Aorta (tissue), 5 donors: ENCODE measurements at regions of chr3 and their contacts with region 1.

Region 1: GRCh38 chr3:14508961-14509795 is 31.0 kb downstream of the GRIP2 start:
- DNase-seq: peak; percentile 70 to 92
- ATAC-seq: peak; percentile 70
- H3K4me3 ChIP-seq: no peak overlapping the region
- H3K27ac ChIP-seq: no peak overlapping the region
- H3K4me1 ChIP-seq: no peaks in the 10 kb centered on the region
- H3K27me3 ChIP-seq: no peaks in the 10 kb centered on the region

Region 2: DNA sequence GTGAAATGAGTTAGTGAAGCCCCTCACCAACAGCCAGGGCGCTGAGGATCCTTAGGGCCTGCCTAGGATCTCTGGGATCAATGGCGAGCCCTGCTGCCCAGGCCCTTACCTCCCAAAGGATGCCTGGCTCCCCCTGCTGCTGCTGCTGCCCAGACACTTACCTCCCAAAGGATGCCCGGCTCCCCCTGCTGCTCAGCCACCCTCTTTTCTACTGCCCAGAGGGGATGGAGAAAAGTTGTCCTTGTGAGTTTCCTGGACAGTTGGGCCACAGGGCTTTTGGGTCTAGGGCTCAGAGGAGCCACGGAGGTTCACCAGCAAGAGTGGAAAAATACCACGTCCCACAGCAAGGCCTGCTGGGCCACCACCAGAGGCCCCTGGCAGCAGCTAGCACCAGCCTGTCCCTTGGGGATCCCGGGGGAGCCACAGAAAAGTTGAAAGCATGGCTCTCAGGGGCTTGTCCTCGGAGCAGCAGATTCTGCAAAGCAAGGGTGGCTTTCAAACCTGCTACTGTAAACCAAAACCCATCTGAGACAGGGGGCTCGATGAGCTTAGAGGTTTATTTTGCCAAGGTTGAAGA is 47.3 kb before region 1 on chr3:
- intact Hi-C with region 1: no loop called
- DNase-seq: peak in 1 of 2 donors; percentile 83
- ATAC-seq: peak; percentile 23
- H3K4me3 ChIP-seq: no peak overlapping the region
- H3K27ac ChIP-seq: no peak overlapping the region
- H3K4me1 ChIP-seq: no peaks in the 10 kb centered on the region
- H3K27me3 ChIP-seq: no peaks in the 10 kb centered on the region

Region 3: DNA sequence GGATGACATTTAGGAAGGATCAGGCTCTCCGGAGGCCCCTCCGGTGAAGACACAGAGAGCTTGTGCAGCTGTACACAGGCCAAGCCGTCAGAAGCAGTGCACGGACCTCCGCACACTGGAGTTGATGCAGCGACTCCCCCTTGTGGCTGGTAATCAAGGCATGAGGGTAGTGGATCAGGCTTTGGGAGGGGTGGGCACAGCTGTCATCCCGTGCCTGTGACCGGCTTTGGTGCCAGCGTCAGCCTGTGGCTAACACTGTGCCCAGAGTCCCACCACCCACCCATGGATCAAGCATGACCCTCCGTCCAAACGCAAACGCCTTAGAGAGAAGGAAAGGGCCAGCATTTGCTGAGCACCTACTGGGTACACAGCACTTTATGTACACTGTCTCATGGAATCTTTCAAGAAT is 39.1 kb after region 1 on chr3:
- intact Hi-C with region 1: loop called in 1 of 2 experiments (anchors 1 kb)
- DNase-seq: peak; percentile 75 to 83
- ATAC-seq: peak; percentile 81
- H3K4me3 ChIP-seq: no peak overlapping the region
- H3K27ac ChIP-seq: no peak overlapping the region
- H3K4me1 ChIP-seq: no peaks in the 10 kb centered on the region
- H3K27me3 ChIP-seq: peaks cover 0 to 2% of the 10 kb centered on the region in 2 donors

Region 4: GRCh38 chr3:14915636-14916222 is 406.6 kb after region 1 on chr3:
- intact Hi-C with region 1: loop called (anchors 2 to 10 kb)
- DNase-seq: no peak
- ATAC-seq: no peak
- H3K4me3 ChIP-seq: no peak overlapping the region
- H3K27ac ChIP-seq: no peak overlapping the region
- H3K4me1 ChIP-seq: no peaks in the 10 kb centered on the region
- H3K27me3 ChIP-seq: no peaks in the 10 kb centered on the region

Region 5: DNA sequence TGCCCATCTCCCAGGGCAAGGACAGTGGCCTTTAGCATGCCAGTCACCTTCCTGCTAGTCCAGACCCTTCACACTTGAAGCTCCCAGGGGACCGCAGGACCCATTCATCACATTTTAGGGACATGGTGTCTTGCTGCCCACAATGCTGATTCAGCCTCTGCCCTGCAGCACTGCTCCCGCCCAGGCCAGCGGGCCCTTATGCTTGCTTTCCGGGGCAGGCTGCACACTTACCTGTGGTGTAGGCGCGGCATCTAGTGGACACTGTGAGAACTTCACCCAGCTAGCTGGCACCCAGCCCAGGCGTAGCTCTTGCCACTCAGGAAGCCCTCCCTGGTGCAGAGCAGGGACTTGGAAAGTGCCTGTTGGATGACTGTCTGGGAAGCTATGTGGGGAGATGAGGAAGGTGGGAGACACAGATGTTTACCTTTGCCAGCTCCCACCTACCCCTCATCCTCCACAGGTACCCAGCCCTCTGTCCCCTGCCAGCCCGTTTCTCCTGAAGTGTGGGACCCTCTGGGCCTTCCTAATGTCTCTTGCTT is 412.0 kb after region 1 on chr3:
- intact Hi-C with region 1: loop called (anchors 2 to 10 kb)
- DNase-seq: peak; percentile 87 to 94
- ATAC-seq: peak; percentile 94
- H3K4me3 ChIP-seq: no peak overlapping the region
- H3K27ac ChIP-seq: no peak overlapping the region
- H3K4me1 ChIP-seq: no peaks in the 10 kb centered on the region
- H3K27me3 ChIP-seq: no peaks in the 10 kb centered on the region